PC-9 (cell line): ENCODE measurements at regions of chr3 and their contacts with region 1.

Region 1: DNA sequence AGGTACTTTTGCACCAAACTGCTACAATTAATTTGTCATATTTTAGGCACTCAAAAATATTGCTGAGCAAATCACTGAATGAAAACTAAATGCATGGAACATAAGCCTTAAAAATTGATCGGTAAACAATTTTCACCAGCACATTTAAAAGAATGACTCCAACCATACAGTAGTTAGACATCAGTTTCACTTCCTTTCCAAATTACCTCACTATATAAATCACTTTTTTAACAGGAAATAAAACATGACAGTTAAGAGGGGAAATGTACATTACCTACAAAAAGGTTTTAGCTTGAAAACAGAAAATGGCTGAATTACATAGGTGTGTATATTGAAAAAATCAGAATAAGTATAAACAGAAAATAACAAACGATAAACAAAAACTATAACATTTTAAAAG is 108.4 kb downstream of the SERPINI1 start:
- DNase-seq: no peak
- H3K4me3 ChIP-seq: no peak overlapping the region
- H3K27ac ChIP-seq: no peak overlapping the region
- H3K4me1 ChIP-seq: no peaks in the 10 kb centered on the region
- H3K27me3 ChIP-seq: no peaks in the 10 kb centered on the region
- CTCF ChIP-seq: no peak

Region 2: DNA sequence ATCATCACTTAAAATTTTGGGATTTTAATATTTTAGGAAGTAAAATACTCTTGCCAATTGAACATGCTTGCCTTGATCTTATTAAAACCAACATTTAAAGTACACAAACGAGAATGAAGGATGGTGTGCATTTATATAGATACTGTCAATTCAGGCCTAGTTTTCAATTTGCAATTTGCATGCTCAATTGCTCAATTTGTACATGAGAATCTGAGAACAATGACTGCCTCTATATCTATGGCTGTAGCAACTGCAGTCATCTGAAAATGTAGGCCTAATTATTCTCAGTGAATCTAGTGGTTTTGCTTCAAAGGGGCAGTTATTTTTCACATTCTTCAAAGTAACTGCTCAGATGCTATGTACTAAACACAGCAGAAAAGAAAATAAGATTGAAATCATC is 482.6 kb before region 1 on chr3:
- CTCF ChIA-PET with region 1: interaction called, 10 read pairs
- POLR2A ChIA-PET with region 1: no interaction called
- intact Hi-C with region 1: no loop called
- DNase-seq: no peak
- H3K4me3 ChIP-seq: no peak overlapping the region
- H3K27ac ChIP-seq: no peak overlapping the region
- H3K4me1 ChIP-seq: no peaks in the 10 kb centered on the region
- H3K27me3 ChIP-seq: no peaks in the 10 kb centered on the region
- CTCF ChIP-seq: no peak

Region 3: GRCh38 chr3:167950212-167950611 is 106.3 kb after region 1 on chr3:
- CTCF ChIA-PET with region 1: no interaction called
- POLR2A ChIA-PET with region 1: no interaction called
- intact Hi-C with region 1: no loop called
- DNase-seq: no peak
- H3K4me3 ChIP-seq: no peak overlapping the region
- H3K27ac ChIP-seq: no peak overlapping the region
- H3K4me1 ChIP-seq: no peaks in the 10 kb centered on the region
- H3K27me3 ChIP-seq: no peaks in the 10 kb centered on the region
- CTCF ChIP-seq: no peak